H1 (cell line): ENCODE measurements at regions of chr2 and their contacts with region 1.

Region 1: DNA sequence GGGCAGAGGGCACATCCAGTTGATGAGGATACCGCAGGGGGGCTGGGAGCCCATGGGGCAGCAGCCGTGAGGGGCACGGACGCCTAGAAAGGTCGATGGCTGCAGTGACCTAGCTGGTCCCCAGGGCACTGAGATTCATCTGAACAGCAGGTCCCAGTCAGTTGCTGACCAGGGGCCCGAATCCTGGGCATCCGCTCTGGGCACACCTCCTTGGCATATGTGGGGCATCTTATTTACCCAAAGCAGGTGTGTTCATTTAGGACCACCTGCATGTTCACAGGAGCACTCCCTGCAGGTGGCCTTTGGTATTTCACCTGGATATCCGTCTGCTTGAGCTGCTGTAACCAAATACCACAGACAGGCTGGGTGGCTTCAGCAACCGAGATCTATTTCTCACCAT is 72.0 kb upstream of the ODC1 start:
- DNase-seq: peak; percentile 43 to 73
- H3K4me3 ChIP-seq: no peak overlapping the region
- H3K27ac ChIP-seq: no peak overlapping the region
- H3K4me1 ChIP-seq: peaks cover 0 to 18% (median 2%) of the 10 kb centered on the region in 4 experiments; a peak in 1 of 7 replicates
- H3K27me3 ChIP-seq: no peaks in the 10 kb centered on the region; a peak in 1 of 7 replicates
- CTCF ChIP-seq: peak; percentile 51 to 72 (median 54)
- EP300 ChIP-seq: no peak
- POLR2A ChIP-seq: no peak
- RAD21 ChIP-seq: peak; percentile 25 to 50

Region 2: DNA sequence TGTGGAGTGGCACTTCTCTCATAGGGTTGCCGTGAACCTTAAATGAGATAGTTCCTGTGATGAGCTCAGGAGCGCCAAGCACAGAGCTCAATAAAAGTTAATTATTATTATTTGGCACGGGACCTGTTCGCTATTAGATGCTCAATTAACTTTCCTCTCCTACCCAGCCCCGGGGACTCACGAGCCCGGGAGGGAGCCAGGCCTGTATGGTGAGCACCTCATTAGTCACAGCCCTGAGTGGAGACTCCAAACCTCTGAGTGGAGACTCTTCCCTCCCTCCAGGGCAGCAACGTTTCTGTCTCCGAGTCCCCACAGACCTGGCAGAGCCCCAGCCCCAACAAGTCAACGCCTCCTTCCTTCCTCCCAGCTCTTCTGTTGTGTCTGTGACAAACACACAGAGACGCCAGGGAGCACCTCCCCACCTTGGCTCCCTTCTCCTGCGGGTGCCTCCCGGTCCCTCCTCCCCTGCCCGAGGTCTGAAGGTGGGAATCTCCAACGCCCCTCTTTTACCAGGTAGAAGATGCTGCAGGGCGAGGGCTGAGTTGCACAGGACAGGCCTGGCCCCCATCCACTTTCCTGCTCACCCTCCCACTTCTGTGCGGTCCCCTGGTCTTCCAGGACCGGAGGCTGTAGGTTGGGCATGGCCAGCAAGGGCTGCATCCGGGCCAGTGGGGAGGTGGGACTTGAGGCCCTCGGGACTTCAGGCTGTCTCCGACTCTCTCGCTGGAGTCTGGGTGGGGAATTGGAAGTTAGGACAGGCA is 19.4 kb before region 1 on chr2:
- CTCF ChIA-PET with region 1: interaction called, 10 read pairs
- POLR2A ChIA-PET with region 1: no interaction called
- DNase-seq: peak in 1 of 2 experiments; percentile 42
- H3K4me3 ChIP-seq: no peak overlapping the region
- H3K27ac ChIP-seq: no peak overlapping the region
- H3K4me1 ChIP-seq: no peaks in the 10 kb centered on the region
- H3K27me3 ChIP-seq: no peaks in the 10 kb centered on the region
- CTCF ChIP-seq: no peak
- EP300 ChIP-seq: no peak
- POLR2A ChIP-seq: no peak
- RAD21 ChIP-seq: no peak

Region 3: DNA sequence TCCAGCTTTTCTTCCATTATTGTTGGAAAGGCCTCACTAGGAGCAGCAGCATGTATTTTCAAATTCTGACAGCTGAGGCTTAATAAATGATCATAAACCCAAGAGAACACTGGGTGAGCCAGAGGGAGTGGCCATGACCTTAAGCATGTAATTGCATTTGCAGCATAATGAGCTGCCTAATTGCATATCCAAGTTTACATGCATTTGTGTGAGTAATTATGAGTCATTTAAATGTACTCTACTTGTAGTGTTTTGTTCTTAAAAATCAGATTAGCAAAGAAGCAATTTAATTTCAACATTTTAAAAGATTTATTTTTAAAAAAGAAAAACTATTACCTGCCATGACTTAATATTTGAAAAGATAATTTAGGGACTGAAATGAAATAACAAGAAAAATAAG is 94.8 kb after region 1 on chr2:
- CTCF ChIA-PET with region 1: no interaction called
- POLR2A ChIA-PET with region 1: no interaction called
- DNase-seq: no peak
- H3K4me3 ChIP-seq: no peak overlapping the region
- H3K27ac ChIP-seq: no peak overlapping the region
- H3K4me1 ChIP-seq: peaks cover 0 to 2% (median 0%) of the 10 kb centered on the region in 4 experiments; a peak in 1 of 7 replicates
- H3K27me3 ChIP-seq: no peaks in the 10 kb centered on the region
- CTCF ChIP-seq: no peak
- EP300 ChIP-seq: no peak
- POLR2A ChIP-seq: no peak
- RAD21 ChIP-seq: no peak